Posterior vena cava (tissue), 2 donors: ENCODE measurements at regions of chr1 and their contacts with region 1.

Region 1: GRCh38 chr1:183537405-183537804 is 52.9 kb downstream of the NCF2 start:
- DNase-seq: no peak

Region 2: GRCh38 chr1:183471743-183472487 is 65.5 kb before region 1 on chr1:
- intact Hi-C with region 1: loop called in 1 of 2 experiments (anchors 10 kb)
- DNase-seq: peak; percentile 99